ENCODE measurements at regions of chr1 and their contacts with region 1.

Region 1: GRCh38 chr1:205983925-205984725 is 19.1 kb downstream of the RAB7B start:
- DNase-seq: peak; percentile 46
- H3K4me3 ChIP-seq: no peak overlapping the region
- H3K27ac ChIP-seq: no peak overlapping the region
- H3K4me1 ChIP-seq: no peaks in the 10 kb centered on the region
- H3K27me3 ChIP-seq: no peaks in the 10 kb centered on the region
- CTCF ChIP-seq: peak; percentile 35 to 62 (median 51)
- EP300 ChIP-seq: no peak
- POLR2A ChIP-seq: no peak

Region 2: DNA sequence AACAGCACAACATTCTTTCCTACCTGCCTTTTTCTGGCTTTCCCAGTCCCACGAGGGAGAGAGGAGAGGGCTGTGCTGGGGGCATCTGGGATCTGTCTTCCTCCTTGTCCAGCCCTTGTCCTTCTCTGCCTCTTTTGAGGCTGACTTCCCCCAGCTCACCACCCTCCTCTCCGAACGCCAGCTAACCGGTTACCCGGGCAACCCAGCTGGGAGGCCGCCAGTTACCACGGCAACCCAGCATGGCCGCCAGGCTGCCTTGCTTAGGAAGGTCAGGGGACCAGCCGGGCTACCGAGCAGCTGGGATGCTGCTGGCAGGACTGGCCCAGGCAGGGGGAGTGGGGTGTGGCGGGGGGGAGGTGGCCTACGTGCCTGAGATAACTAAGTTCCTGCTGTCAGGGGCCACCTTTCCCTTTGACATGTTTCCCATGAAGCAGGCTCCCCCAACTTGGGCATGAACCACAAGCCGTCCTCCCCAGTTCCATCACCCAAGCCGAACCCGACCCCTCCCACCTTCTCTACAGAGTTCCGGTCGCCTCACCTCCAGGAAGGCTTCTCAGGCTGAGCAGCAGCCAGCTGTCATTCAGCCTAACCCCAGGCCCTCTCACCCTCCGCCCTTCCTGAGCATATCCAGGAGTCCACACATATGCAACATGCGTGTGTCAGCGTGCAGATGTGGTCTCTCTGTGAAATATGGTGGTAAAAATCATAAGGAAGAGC is 1633.1 kb before region 1 on chr1:
- in situ Hi-C with region 1: no loop called
- intact Hi-C with region 1: no loop called
- DNase-seq: peak; percentile 72
- H3K4me3 ChIP-seq: no peak overlapping the region
- H3K27ac ChIP-seq: peak overlapping the region; percentile 81 to 86 (median 84)
- H3K4me1 ChIP-seq: peaks cover 29 to 57% (median 42%) of the 10 kb centered on the region in 4 donors
- H3K27me3 ChIP-seq: no peaks in the 10 kb centered on the region
- CTCF ChIP-seq: no peak
- EP300 ChIP-seq: no peak
- POLR2A ChIP-seq: no peak

Region 3: GRCh38 chr1:205775015-205775716 is 209.0 kb before region 1 on chr1 and contains the start of gene RAB29:
- in situ Hi-C with region 1: no loop called
- intact Hi-C with region 1: no loop called
- DNase-seq: peak; percentile 82
- H3K4me3 ChIP-seq: peak within 1 kb of the TSS; percentile 39 to 82 (median 66)
- H3K27ac ChIP-seq: peak within 1 kb of the TSS; percentile 55 to 78 (median 70)
- H3K4me1 ChIP-seq: peaks cover 0 to 16% (median 4%) of the 10 kb centered on the region in 4 donors
- H3K27me3 ChIP-seq: no peaks in the 10 kb centered on the region
- CTCF ChIP-seq: no peak
- EP300 ChIP-seq: no peak
- POLR2A ChIP-seq: peak; percentile 25
- total RNA-seq, gene RAB29: 1.1 to 13.9 (median 10.2) TPM

Region 4: GRCh38 chr1:205791568-205792180 is 192.5 kb before region 1 on chr1:
- in situ Hi-C with region 1: loop called in 3 of 4 experiments (anchors 10 kb)
- intact Hi-C with region 1: loop called (anchors 2 kb)
- DNase-seq: peak; percentile 63
- H3K4me3 ChIP-seq: no peak overlapping the region
- H3K27ac ChIP-seq: no peak overlapping the region
- H3K4me1 ChIP-seq: no peaks in the 10 kb centered on the region
- H3K27me3 ChIP-seq: no peaks in the 10 kb centered on the region
- CTCF ChIP-seq: peak; percentile 65 to 78 (median 70)
- EP300 ChIP-seq: no peak
- POLR2A ChIP-seq: no peak

Region 5: GRCh38 chr1:206094024-206094423 is 109.9 kb after region 1 on chr1:
- in situ Hi-C with region 1: no loop called
- intact Hi-C with region 1: no loop called
- DNase-seq: no peak
- H3K4me3 ChIP-seq: no peak overlapping the region
- H3K27ac ChIP-seq: no peak overlapping the region
- H3K4me1 ChIP-seq: no peaks in the 10 kb centered on the region
- H3K27me3 ChIP-seq: peaks cover 4% of the 10 kb centered on the region
- CTCF ChIP-seq: no peak
- EP300 ChIP-seq: no peak
- POLR2A ChIP-seq: no peak

Measured in transverse colon (tissue), 4 donors.